ENCODE measurements at regions of chr20 and their contacts with region 1.

Region 1: GRCh38 chr20:33810885-33811777 is at the start of gene CHMP4B:
- DNase-seq: peak; percentile 99
- ATAC-seq: peak; percentile 93
- H3K4me3 Mint-ChIP-seq: peak within 1 kb of the TSS; percentile 83
- H3K27ac Mint-ChIP-seq: peak within 1 kb of the TSS; percentile 89
- H3K4me1 Mint-ChIP-seq: peaks cover 36% of the 10 kb centered on the region
- H3K27me3 Mint-ChIP-seq: no peaks in the 10 kb centered on the region
- total RNA-seq, gene CHMP4B: 86.0 to 94.1 TPM

Region 2: GRCh38 chr20:33064572-33065287 is 746.4 kb before region 1 on chr20:
- CTCF ChIA-PET with region 1: no interaction called
- POLR2A ChIA-PET with region 1: interaction called, 13 read pairs
- intact Hi-C with region 1: no loop called
- DNase-seq: no peak
- ATAC-seq: no peak
- H3K4me3 Mint-ChIP-seq: no peak overlapping the region
- H3K27ac Mint-ChIP-seq: no peak overlapping the region
- H3K4me1 Mint-ChIP-seq: peaks cover 5% of the 10 kb centered on the region
- H3K27me3 Mint-ChIP-seq: no peaks in the 10 kb centered on the region

Region 3: DNA sequence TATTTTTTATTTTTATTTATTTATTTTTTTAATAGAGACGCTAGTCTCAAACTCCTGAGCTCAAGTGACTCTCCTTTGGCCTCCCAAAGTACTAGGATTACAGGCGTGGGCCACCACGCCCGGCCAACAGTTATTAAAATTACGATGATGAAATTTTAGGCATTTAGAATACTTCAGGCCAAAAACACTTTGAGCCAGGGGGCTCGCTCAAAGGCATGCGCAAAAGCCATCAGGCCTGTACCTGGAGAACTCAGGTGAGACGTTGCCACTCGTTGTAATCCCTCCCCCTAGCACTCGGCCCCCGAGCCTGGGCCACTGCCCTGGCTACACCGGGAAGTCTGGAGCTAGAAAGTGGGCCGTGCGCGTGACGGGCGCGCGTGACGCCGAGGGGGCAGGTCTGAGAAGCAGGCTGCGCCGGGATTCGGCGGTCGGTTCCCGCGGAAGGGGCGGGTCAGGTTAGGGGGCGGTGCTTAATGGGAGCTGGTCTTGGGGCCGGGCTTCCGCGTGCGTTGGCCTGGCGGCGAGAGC is 321.6 kb before region 1 on chr20:
- CTCF ChIA-PET with region 1: no interaction called
- POLR2A ChIA-PET with region 1: interaction called, 3 read pairs
- intact Hi-C with region 1: loop called in 1 of 2 experiments (anchors 2 kb)
- DNase-seq: peak; percentile 99
- ATAC-seq: peak; percentile 98
- H3K4me3 Mint-ChIP-seq: peak overlapping the region; percentile 85
- H3K27ac Mint-ChIP-seq: peak overlapping the region; percentile 78
- H3K4me1 Mint-ChIP-seq: peaks cover 6% of the 10 kb centered on the region
- H3K27me3 Mint-ChIP-seq: no peaks in the 10 kb centered on the region

Region 4: GRCh38 chr20:33686100-33686983 is 124.8 kb before region 1 on chr20 and contains the start of gene E2F1:
- CTCF ChIA-PET with region 1: no interaction called
- POLR2A ChIA-PET with region 1: interaction called, 4 read pairs
- intact Hi-C with region 1: loop called in 1 of 2 experiments (anchors 1 kb)
- DNase-seq: peak; percentile 98
- ATAC-seq: peak; percentile 84
- H3K4me3 Mint-ChIP-seq: peak within 1 kb of the TSS; percentile 95
- H3K27ac Mint-ChIP-seq: peak within 1 kb of the TSS; percentile 83
- H3K4me1 Mint-ChIP-seq: peaks cover 73% of the 10 kb centered on the region
- H3K27me3 Mint-ChIP-seq: no peaks in the 10 kb centered on the region
- total RNA-seq, gene E2F1: 45.9 to 50.9 TPM

Region 5: GRCh38 chr20:33826270-33826897 is 15.3 kb after region 1 on chr20:
- CTCF ChIA-PET with region 1: interaction called, 10 read pairs
- POLR2A ChIA-PET with region 1: interaction called, 4 read pairs
- intact Hi-C with region 1: no loop called
- DNase-seq: no peak
- ATAC-seq: no peak
- H3K4me3 Mint-ChIP-seq: no peak overlapping the region
- H3K27ac Mint-ChIP-seq: no peak overlapping the region
- H3K4me1 Mint-ChIP-seq: peaks cover 66% of the 10 kb centered on the region
- H3K27me3 Mint-ChIP-seq: no peaks in the 10 kb centered on the region

Region 6: DNA sequence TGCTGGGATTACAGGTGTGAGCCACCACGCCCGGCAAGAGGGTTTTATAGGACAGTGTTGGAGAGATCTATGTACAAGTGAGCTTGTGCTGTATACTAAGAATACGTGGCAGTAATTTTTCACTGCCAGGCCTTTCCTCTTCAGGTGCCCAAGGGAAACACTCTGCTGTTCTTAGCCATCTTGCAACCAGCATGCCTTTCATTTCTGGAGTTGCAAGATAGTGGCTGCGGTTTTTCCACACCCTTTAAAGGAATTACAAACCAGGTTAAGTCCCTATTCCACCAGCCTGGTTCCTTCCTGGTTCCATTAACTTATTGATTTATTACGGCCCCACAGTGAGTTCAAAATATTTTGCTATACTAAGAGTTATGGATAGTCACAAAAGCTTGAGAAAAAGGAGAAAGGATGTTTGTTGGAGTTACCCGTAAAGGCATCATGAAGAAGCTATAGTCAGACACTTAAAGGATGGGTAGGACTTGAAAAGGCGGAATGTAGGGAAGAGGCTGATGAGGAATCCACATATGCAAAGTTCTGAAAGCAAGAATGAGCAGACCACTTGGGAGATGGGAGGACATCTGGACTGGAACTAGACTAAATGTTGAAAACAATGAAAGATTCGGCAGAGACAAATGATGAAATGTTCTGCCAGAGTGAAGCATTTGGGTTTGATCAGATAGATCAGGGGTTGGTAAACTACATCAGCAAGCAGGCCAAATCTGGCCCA is 368.7 kb after region 1 on chr20:
- CTCF ChIA-PET with region 1: no interaction called
- POLR2A ChIA-PET with region 1: no interaction called
- intact Hi-C with region 1: no loop called
- DNase-seq: no peak
- ATAC-seq: no peak
- H3K4me3 Mint-ChIP-seq: no peak overlapping the region
- H3K27ac Mint-ChIP-seq: no peak overlapping the region
- H3K4me1 Mint-ChIP-seq: no peaks in the 10 kb centered on the region
- H3K27me3 Mint-ChIP-seq: peaks cover 4% of the 10 kb centered on the region

Region 7: GRCh38 chr20:34363062-34363464 is 551.9 kb after region 1 on chr20 and contains the start of gene ITCH:
- CTCF ChIA-PET with region 1: no interaction called
- POLR2A ChIA-PET with region 1: no interaction called
- intact Hi-C with region 1: loop called in 1 of 2 experiments (anchors 1 kb)
- DNase-seq: peak; percentile 97
- ATAC-seq: peak; percentile 99
- H3K4me3 Mint-ChIP-seq: peak within 1 kb of the TSS; percentile 91
- H3K27ac Mint-ChIP-seq: peak within 1 kb of the TSS; percentile 98
- H3K4me1 Mint-ChIP-seq: peaks cover 38% of the 10 kb centered on the region
- H3K27me3 Mint-ChIP-seq: no peaks in the 10 kb centered on the region
- total RNA-seq, gene ITCH: 41.4 to 43.5 TPM